B cell (primary cell): ENCODE measurements at regions of chr16 and their contacts with region 1.

Region 1: GRCh38 chr16:11768849-11769248 is 26.2 kb upstream of the TXNDC11 start:
- DNase-seq: peak; percentile 75
- ATAC-seq: peak; percentile 76
- H3K4me3 ChIP-seq: peak overlapping the region in 3 of 5 experiments; percentile 12 to 32 (median 13)
- H3K4me3 Mint-ChIP-seq: peak overlapping the region; percentile 73
- H3K27ac ChIP-seq: peak overlapping the region; percentile 67 to 68
- H3K27ac Mint-ChIP-seq: peak overlapping the region; percentile 89
- H3K4me1 ChIP-seq: peaks cover 25 to 39% of the 10 kb centered on the region in 2 donors
- H3K4me1 Mint-ChIP-seq: peaks cover 47% of the 10 kb centered on the region
- H3K27me3 ChIP-seq: no peaks in the 10 kb centered on the region
- H3K27me3 Mint-ChIP-seq: no peaks in the 10 kb centered on the region
- CTCF ChIP-seq: no peak

Region 2: DNA sequence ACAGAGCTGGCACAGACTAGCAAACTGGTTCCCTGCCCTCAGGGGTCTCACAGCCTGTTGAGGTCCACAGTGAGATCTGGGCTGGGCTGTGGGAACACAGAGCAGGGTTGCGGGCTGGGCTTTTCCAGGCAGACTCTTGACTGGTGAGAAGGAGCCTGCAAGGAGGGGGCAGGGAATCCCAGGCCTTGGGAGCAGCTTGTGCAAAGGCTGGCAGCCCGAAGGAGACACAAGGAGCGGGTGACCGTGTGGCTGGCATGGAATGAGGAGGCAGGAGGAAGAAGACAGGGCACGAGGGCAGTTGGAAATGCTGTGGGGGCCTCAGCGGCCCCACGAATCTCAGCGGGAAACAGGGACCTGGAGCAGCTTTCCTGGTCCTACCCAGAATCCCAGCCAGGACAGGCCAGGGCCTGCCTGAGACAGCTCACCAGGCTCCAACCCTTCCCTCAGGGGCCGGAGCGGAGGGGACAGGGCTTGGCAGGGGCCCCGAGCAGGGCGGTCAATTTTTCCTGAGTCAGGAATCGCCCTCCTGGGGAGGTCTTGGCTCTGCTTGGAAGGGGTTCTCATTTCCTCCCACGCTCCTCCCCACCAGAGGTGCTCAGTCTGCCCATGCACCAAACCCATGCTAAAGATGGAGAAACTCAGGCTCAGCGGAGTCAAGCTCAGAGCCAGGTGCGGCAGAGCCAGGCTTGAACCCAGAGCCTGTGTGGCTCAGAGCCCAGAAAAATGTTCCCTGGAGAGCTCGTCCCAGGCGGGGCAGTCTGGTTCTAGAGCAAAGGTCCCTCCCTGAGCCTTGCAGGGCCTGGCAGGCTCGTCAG is 109.7 kb before region 1 on chr16:
- CTCF ChIA-PET with region 1: no interaction called
- POLR2A ChIA-PET with region 1: no interaction called
- intact Hi-C with region 1: no loop called
- DNase-seq: no peak
- ATAC-seq: no peak
- H3K4me3 ChIP-seq: no peak overlapping the region
- H3K4me3 Mint-ChIP-seq: no peak overlapping the region
- H3K27ac ChIP-seq: no peak overlapping the region
- H3K27ac Mint-ChIP-seq: no peak overlapping the region
- H3K4me1 ChIP-seq: peaks cover 2% of the 10 kb centered on the region in 2 donors
- H3K4me1 Mint-ChIP-seq: peaks cover 8% of the 10 kb centered on the region
- H3K27me3 ChIP-seq: no peaks in the 10 kb centered on the region
- H3K27me3 Mint-ChIP-seq: no peaks in the 10 kb centered on the region
- CTCF ChIP-seq: no peak

Region 3: DNA sequence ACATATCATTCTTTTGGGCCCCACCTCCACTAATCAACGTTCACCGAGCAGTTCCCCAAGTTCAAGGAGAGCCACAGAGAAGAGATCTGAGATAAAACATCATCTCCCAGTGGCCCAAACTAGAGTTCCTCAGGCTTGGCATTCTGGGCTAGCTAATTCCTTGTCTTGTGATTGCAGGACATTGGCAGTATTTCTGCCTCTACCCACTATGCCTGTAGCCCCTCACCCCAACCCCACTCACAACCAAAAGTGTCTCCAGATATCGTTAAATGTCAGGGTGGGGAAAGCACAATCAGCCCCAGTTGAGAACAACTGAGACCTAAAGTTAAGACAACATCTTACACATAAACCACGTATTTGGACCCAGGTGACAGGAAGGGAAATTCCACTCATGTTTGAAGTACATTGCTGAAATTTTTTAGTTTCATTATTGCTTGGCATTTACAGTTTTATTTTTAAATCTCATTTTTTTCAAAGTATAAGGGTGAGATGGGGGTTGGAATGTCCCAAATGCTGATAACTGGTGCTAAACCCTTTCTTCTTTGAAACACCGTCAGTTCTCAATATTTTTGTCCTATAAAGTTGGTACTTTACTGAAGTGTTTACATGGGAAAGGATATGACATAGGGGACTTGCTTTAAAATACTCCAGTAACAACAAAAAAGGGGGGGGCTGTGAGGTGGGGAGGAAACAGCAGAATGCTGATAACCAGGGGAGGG is 14.6 kb after region 1 on chr16:
- CTCF ChIA-PET with region 1: interaction called, 10 read pairs
- POLR2A ChIA-PET with region 1: interaction called, 6 read pairs
- intact Hi-C with region 1: loop called (anchors 1 kb)
- DNase-seq: peak; percentile 86
- ATAC-seq: peak; percentile 75
- H3K4me3 ChIP-seq: peak overlapping the region in 4 of 5 experiments; percentile 22 to 57 (median 37)
- H3K4me3 Mint-ChIP-seq: peak overlapping the region; percentile 93
- H3K27ac ChIP-seq: peak overlapping the region; percentile 98
- H3K27ac Mint-ChIP-seq: peak overlapping the region; percentile 98
- H3K4me1 ChIP-seq: peaks cover 31 to 41% of the 10 kb centered on the region in 2 donors
- H3K4me1 Mint-ChIP-seq: peaks cover 55% of the 10 kb centered on the region
- H3K27me3 ChIP-seq: no peaks in the 10 kb centered on the region
- H3K27me3 Mint-ChIP-seq: no peaks in the 10 kb centered on the region
- CTCF ChIP-seq: no peak

Region 4: GRCh38 chr16:11806721-11807120 is 37.9 kb after region 1 on chr16:
- CTCF ChIA-PET with region 1: interaction called, 5 read pairs
- POLR2A ChIA-PET with region 1: no interaction called
- intact Hi-C with region 1: loop called (anchors 5 kb)
- DNase-seq: no peak
- ATAC-seq: no peak
- H3K4me3 ChIP-seq: no peak overlapping the region
- H3K4me3 Mint-ChIP-seq: no peak overlapping the region
- H3K27ac ChIP-seq: no peak overlapping the region
- H3K27ac Mint-ChIP-seq: no peak overlapping the region
- H3K4me1 ChIP-seq: peaks cover 0 to 16% of the 10 kb centered on the region in 2 donors
- H3K4me1 Mint-ChIP-seq: peaks cover 8% of the 10 kb centered on the region
- H3K27me3 ChIP-seq: no peaks in the 10 kb centered on the region
- H3K27me3 Mint-ChIP-seq: no peaks in the 10 kb centered on the region
- CTCF ChIP-seq: no peak